ENCODE measurements at regions of chr10 and their contacts with region 1.

Region 1: GRCh38 chr10:49446031-49446430 is 50.1 kb upstream of the DRGX start:
- DNase-seq: no peak
- H3K4me3 ChIP-seq: no peak overlapping the region
- H3K27ac ChIP-seq: no peak overlapping the region
- H3K4me1 ChIP-seq: no peaks in the 10 kb centered on the region
- H3K27me3 ChIP-seq: no peaks in the 10 kb centered on the region
- CTCF ChIP-seq: no peak
- POLR2A ChIP-seq: no peak

Region 2: DNA sequence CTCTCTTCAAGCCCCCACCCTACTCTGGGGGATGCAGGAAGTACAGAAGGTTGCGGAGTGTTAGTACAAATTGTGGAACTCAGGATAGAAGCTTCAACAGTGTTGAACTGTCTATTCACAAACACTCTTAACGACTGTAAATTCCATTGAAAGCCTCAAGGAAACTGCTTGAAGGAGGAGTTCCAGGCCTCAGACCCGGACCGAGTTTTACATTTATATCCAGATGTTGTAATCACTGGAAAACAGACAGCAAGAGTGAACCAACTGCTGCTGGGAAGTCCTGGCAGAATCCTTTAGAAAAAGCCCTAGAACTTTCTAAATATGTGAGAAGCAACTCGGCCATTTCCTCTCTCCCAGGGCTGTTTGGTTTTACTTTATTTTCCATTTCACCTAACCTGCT is 422.3 kb before region 1 on chr10:
- intact Hi-C with region 1: no loop called
- DNase-seq: no peak
- H3K4me3 ChIP-seq: no peak overlapping the region
- H3K27ac ChIP-seq: peak overlapping the region; percentile 40 to 85
- H3K4me1 ChIP-seq: peaks cover 0 to 6% of the 10 kb centered on the region in 2 donors
- H3K27me3 ChIP-seq: no peaks in the 10 kb centered on the region
- CTCF ChIP-seq: no peak
- POLR2A ChIP-seq: no peak

Region 3: DNA sequence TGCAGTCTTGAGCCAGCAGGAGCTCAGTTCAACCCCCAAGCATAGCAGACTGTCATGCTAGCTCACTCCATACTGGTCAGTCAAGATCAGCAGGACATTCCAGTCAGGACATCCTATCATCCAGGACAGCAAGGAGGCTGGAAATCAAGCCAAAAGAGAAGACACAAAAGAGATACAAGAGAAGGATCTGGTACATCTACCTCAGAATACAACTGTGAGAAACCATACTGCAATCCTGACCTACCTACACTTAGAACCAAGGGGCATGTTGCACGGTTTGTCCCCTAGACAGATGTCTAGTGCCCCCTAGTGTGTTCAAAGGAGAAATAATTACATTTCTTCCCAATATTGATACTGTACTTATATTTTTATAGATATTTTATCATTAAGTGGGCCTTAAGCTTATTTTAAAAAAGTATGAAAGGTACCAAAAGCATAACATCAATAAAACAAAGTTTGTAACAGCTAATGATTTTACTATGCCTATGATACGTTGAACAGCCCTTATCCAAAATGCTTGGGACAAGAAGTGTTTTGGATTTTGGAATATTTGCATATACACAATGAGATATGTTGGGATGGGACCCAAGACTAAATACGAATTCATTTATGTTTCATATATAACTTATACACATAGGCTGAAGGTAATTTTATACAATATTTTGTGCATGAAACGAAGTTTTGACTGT is 66.2 kb after region 1 on chr10:
- intact Hi-C with region 1: no loop called
- DNase-seq: no peak
- H3K4me3 ChIP-seq: no peak overlapping the region
- H3K27ac ChIP-seq: no peak overlapping the region
- H3K4me1 ChIP-seq: no peaks in the 10 kb centered on the region
- H3K27me3 ChIP-seq: no peaks in the 10 kb centered on the region
- CTCF ChIP-seq: peak in 2 of 3 donors; percentile 29 to 52
- POLR2A ChIP-seq: no peak

Region 4: DNA sequence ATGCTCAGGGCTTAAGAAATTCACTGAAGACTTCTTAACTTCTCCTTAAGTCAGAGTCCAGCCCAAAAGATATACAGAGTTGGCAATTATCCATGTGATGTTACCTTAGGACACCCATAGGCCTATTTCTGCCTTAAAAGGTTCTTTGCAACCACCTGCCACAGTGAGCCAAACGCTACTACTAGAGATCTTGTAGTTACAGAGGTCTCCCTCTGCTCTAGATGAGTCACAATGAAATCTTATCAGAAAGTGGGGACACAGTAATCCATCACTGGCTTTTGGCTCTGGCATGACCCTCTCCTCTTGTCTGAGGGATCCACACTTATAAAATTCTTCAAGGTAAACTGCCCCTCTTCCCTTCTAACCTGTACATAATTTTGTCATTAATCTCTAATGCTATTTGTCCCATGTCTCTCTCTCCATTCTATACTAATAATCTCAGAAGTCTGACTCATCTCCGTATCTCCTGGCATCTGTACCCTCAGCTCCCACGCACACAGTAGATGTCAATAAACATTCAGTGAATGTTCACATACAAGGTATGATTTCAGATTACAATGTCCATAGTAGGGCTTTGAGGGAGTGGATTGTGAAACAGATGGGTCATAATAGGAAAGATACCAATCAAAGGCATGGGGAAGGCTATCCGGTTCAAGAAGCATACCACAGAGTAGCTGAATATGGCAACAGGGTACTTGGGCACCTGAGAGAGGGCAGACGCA is 1065.6 kb after region 1 on chr10:
- intact Hi-C with region 1: loop called (anchors 10 kb)
- DNase-seq: no peak
- H3K4me3 ChIP-seq: no peak overlapping the region
- H3K27ac ChIP-seq: peak overlapping the region; percentile 27 to 56
- H3K4me1 ChIP-seq: peaks cover 0 to 4% of the 10 kb centered on the region in 2 donors
- H3K27me3 ChIP-seq: no peaks in the 10 kb centered on the region
- CTCF ChIP-seq: no peak
- POLR2A ChIP-seq: no peak